ENCODE measurements at regions of chr7 and their contacts with region 1.

Region 1: GRCh38 chr7:114026486-114027089 is 107.8 kb upstream of the PPP1R3A start:
- DNase-seq: no peak
- ATAC-seq: peak; percentile 49
- H3K4me3 Mint-ChIP-seq: no peak overlapping the region
- H3K27ac Mint-ChIP-seq: no peak overlapping the region
- H3K4me1 Mint-ChIP-seq: no peaks in the 10 kb centered on the region
- H3K27me3 Mint-ChIP-seq: no peaks in the 10 kb centered on the region
- CTCF ChIP-seq: no peak

Region 2: GRCh38 chr7:112157072-112157471 is 1869.5 kb before region 1 on chr7:
- CTCF ChIA-PET with region 1: no interaction called
- POLR2A ChIA-PET with region 1: no interaction called
- intact Hi-C with region 1: no loop called
- DNase-seq: no peak
- ATAC-seq: no peak
- H3K4me3 Mint-ChIP-seq: no peak overlapping the region
- H3K27ac Mint-ChIP-seq: no peak overlapping the region
- H3K4me1 Mint-ChIP-seq: peaks cover 4% of the 10 kb centered on the region
- H3K27me3 Mint-ChIP-seq: no peaks in the 10 kb centered on the region
- CTCF ChIP-seq: no peak

Region 3: DNA sequence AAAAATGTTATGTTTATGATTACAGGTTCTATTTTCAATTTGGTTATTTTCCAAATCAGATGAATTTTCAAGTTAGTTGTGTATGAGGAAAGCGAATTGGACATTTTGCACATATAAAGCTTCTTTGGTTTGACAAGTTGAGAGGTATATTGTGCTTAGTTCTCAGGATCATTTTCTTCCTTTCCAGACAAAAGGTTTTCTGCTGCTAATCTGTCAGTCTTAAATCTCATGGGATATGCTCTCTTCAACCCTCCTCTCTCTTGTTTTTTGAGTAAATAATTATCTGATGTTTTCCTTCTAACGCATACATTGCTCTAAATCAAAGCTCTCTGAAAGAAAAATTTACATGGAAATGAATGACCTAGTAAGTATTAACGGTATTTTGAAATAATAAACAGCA is 185.6 kb before region 1 on chr7:
- CTCF ChIA-PET with region 1: no interaction called
- POLR2A ChIA-PET with region 1: no interaction called
- intact Hi-C with region 1: no loop called
- DNase-seq: no peak
- ATAC-seq: no peak
- H3K4me3 Mint-ChIP-seq: no peak overlapping the region
- H3K27ac Mint-ChIP-seq: no peak overlapping the region
- H3K4me1 Mint-ChIP-seq: no peaks in the 10 kb centered on the region
- H3K27me3 Mint-ChIP-seq: no peaks in the 10 kb centered on the region
- CTCF ChIP-seq: no peak

Region 4: DNA sequence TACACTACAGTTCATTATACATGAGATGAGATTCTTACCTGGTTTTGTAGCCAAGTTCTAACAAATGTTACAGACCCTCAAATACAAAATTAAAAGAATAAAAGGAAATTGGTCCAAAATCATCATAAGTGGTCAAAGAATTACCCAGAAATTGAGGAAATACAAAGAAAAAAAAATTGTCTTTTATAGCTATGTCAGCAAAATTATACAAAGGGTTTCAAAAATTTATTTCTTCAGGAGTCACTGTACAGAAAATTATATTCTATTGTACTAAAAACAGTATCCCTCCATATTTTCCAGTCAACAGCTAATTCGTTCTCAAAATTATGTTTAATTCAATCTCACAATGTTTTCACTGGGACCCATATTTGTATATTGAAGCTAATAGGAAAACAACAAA is 122.1 kb before region 1 on chr7:
- CTCF ChIA-PET with region 1: no interaction called
- POLR2A ChIA-PET with region 1: no interaction called
- intact Hi-C with region 1: no loop called
- DNase-seq: no peak
- ATAC-seq: no peak
- H3K4me3 Mint-ChIP-seq: no peak overlapping the region
- H3K27ac Mint-ChIP-seq: no peak overlapping the region
- H3K4me1 Mint-ChIP-seq: no peaks in the 10 kb centered on the region
- H3K27me3 Mint-ChIP-seq: no peaks in the 10 kb centered on the region
- CTCF ChIP-seq: no peak

Region 5: GRCh38 chr7:114217026-114217425 is 190.4 kb after region 1 on chr7:
- CTCF ChIA-PET with region 1: no interaction called
- POLR2A ChIA-PET with region 1: no interaction called
- intact Hi-C with region 1: loop called (anchors 10 kb)
- DNase-seq: no peak
- ATAC-seq: no peak
- H3K4me3 Mint-ChIP-seq: no peak overlapping the region
- H3K27ac Mint-ChIP-seq: no peak overlapping the region
- H3K4me1 Mint-ChIP-seq: no peaks in the 10 kb centered on the region
- H3K27me3 Mint-ChIP-seq: peaks cover 1% of the 10 kb centered on the region
- CTCF ChIP-seq: no peak

Region 6: GRCh38 chr7:114539575-114539974 is 513.0 kb after region 1 on chr7:
- CTCF ChIA-PET with region 1: no interaction called
- POLR2A ChIA-PET with region 1: no interaction called
- intact Hi-C with region 1: loop called (anchors 1 kb)
- DNase-seq: no peak
- ATAC-seq: no peak
- H3K4me3 Mint-ChIP-seq: no peak overlapping the region
- H3K27ac Mint-ChIP-seq: no peak overlapping the region
- H3K4me1 Mint-ChIP-seq: no peaks in the 10 kb centered on the region
- H3K27me3 Mint-ChIP-seq: no peaks in the 10 kb centered on the region
- CTCF ChIP-seq: no peak

Region 7: DNA sequence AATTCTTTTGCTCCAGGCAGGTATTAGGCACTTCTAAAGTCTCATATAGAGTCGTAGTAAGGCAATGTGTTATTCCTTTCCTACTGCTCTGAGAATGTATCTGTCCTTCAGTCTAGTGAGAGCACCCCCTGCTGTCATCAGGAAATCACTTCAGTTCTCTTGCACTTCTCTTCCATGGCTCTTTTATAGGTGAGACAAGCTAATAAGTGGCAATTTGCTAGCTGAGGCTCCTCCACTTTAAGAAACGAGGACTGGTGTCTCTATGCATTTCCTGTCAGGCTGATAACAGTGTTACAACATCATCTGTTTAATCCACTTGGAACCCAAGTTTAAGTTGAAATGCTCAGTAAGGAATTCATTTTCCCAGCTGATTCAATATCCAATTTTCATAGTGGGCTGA is 1653.4 kb after region 1 on chr7:
- CTCF ChIA-PET with region 1: no interaction called
- POLR2A ChIA-PET with region 1: no interaction called
- intact Hi-C with region 1: loop called (anchors 1 kb)
- DNase-seq: no peak
- ATAC-seq: no peak
- H3K4me3 Mint-ChIP-seq: no peak overlapping the region
- H3K27ac Mint-ChIP-seq: no peak overlapping the region
- H3K4me1 Mint-ChIP-seq: no peaks in the 10 kb centered on the region
- H3K27me3 Mint-ChIP-seq: no peaks in the 10 kb centered on the region
- CTCF ChIP-seq: no peak

Region 8: GRCh38 chr7:115748131-115748738 is 1721.6 kb after region 1 on chr7:
- CTCF ChIA-PET with region 1: no interaction called
- POLR2A ChIA-PET with region 1: no interaction called
- intact Hi-C with region 1: loop called (anchors 5 kb)
- DNase-seq: no peak
- ATAC-seq: no peak
- H3K4me3 Mint-ChIP-seq: no peak overlapping the region
- H3K27ac Mint-ChIP-seq: no peak overlapping the region
- H3K4me1 Mint-ChIP-seq: no peaks in the 10 kb centered on the region
- H3K27me3 Mint-ChIP-seq: no peaks in the 10 kb centered on the region
- CTCF ChIP-seq: no peak

Region 9: DNA sequence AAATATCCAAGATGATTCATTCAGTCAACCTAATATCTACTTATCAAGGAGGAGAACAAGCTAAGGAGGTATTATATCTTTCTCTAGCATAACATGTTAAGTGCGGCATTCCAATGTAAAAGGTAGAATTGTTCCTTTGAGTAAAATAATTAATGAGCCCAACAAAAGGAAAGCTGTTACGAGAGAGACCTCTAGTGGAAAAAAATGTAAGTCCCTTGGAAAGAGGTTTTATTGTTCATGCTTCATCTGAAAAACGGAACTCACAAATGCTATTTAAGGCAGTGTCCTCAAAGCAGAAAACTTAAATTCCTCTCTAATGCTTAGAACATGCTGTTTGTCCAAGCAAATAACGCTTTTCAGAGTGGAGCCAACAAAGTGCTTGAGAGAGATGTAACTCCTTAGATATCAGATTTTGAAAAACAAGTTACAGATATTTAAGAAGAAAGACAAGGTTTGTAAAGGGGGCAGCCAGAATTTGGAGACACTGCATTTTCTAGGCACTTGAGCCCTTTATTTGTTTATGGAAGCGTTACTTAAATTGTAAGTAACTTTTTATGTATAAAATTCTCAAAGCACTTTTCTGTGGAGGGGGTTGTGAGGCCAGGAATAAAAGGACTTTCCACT is 1884.1 kb after region 1 on chr7:
- CTCF ChIA-PET with region 1: no interaction called
- POLR2A ChIA-PET with region 1: no interaction called
- intact Hi-C with region 1: loop called (anchors 1 kb)
- DNase-seq: no peak
- ATAC-seq: peak; percentile 37
- H3K4me3 Mint-ChIP-seq: no peak overlapping the region
- H3K27ac Mint-ChIP-seq: no peak overlapping the region
- H3K4me1 Mint-ChIP-seq: peaks cover 4% of the 10 kb centered on the region
- H3K27me3 Mint-ChIP-seq: peaks cover 4% of the 10 kb centered on the region
- CTCF ChIP-seq: no peak

Measured in activated B cell treated with CpG ODN at 0.5 μM for 24 hours (primary cell).